ENCODE measurements at regions of chr11 and their contacts with region 1.

Region 1: DNA sequence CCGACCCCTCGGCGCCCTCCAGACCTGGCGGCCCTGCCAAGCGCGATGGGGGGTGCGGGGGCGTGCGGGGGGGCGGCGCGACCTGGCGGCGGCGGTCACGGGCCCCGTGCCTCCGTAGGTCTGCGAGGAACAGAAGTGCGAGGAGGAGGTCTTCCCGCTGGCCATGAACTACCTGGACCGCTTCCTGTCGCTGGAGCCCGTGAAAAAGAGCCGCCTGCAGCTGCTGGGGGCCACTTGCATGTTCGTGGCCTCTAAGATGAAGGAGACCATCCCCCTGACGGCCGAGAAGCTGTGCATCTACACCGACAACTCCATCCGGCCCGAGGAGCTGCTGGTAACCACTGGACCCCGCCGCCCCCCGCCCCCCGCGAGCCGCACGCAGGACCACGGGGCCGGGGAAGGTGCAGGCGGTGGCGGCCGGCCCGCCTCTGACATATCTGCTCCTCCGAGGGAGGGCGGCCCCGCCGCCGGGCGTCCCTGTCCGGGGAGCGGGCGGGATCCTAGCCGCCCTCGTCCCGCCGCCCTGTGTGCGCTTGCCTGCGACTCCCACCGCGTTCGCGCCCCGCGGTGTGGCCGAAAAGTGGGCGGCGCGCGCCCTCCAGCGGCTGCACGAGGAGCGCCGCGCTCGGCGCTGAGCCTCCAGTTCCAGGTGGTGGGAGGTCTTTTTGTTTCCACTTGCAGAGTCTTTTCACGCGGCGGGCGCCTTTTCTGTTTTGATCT is 2.1 kb downstream of the CCND1 start:
- DNase-seq: peak; percentile 72
- ATAC-seq: peak; percentile 85
- H3K4me3 Mint-ChIP-seq: no peak overlapping the region
- H3K27ac Mint-ChIP-seq: no peak overlapping the region
- H3K4me1 Mint-ChIP-seq: peaks cover 6% of the 10 kb centered on the region
- H3K27me3 Mint-ChIP-seq: peaks cover 30% of the 10 kb centered on the region

Region 2: GRCh38 chr11:69101115-69101791 is 541.8 kb before region 1 on chr11:
- CTCF ChIA-PET with region 1: interaction called, 28 read pairs
- DNase-seq: peak; percentile 67
- ATAC-seq: peak; percentile 86
- H3K4me3 Mint-ChIP-seq: no peak overlapping the region
- H3K27ac Mint-ChIP-seq: no peak overlapping the region
- H3K4me1 Mint-ChIP-seq: no peaks in the 10 kb centered on the region
- H3K27me3 Mint-ChIP-seq: peaks cover 3% of the 10 kb centered on the region

Region 3: DNA sequence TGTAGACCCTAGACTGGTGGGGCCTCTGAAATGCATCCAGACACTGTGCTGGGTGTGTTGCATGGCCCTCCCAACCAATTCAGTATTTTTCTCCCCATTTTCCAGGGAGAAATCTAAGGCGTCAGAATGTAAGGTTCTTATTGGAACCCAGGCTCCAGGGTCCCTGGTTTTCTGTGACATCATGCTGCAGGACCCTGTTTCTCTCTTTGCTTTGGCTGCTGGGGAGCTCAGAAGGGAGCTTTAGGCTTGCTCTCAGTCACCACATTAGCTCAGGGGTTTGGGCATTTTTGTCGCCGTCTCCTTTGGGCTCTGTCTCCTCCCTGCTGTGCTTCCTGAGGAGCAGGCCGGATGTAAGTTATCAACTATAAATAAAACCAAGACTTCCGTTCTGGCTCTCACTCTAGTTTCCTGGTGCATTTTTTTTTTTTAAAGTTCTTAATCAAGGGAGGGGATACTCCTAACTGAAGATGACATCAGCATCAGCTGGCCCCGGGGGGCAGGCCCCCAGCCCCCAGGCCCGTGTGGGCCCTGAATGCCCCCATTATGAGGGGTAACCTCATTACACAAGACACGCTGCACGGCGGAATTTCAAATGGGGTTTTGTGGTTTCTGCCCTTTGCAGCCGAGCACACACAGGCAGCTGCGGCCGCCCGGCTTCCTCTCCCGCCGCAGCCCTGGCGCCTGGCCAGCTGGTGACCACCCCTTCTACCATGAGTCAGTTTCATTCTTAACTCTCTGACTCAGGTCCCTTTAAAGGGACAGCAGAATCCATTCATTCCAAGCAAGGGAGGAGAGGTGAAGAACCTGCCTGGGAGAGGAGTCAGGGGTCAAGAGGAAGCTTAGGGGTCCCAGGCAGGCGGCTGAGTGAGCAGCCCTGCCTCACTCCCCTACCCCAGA is 345.9 kb before region 1 on chr11:
- CTCF ChIA-PET with region 1: interaction called, 18 read pairs
- DNase-seq: peak; percentile 93
- ATAC-seq: peak; percentile 67
- H3K4me3 Mint-ChIP-seq: peak overlapping the region; percentile 67
- H3K27ac Mint-ChIP-seq: peak overlapping the region; percentile 96
- H3K4me1 Mint-ChIP-seq: peaks cover 59% of the 10 kb centered on the region
- H3K27me3 Mint-ChIP-seq: peaks cover 6% of the 10 kb centered on the region

Measured in activated CD8-positive, alpha-beta memory T cell treated with anti-CD3 and anti-CD28 coated beads, Interleukin-2, amount 10 ng/mL, durations not matched to agents 7 days and 5 days (primary cell).